GM12878 (cell line): ENCODE measurements at regions of chr10 and their contacts with region 1.

Region 1: DNA sequence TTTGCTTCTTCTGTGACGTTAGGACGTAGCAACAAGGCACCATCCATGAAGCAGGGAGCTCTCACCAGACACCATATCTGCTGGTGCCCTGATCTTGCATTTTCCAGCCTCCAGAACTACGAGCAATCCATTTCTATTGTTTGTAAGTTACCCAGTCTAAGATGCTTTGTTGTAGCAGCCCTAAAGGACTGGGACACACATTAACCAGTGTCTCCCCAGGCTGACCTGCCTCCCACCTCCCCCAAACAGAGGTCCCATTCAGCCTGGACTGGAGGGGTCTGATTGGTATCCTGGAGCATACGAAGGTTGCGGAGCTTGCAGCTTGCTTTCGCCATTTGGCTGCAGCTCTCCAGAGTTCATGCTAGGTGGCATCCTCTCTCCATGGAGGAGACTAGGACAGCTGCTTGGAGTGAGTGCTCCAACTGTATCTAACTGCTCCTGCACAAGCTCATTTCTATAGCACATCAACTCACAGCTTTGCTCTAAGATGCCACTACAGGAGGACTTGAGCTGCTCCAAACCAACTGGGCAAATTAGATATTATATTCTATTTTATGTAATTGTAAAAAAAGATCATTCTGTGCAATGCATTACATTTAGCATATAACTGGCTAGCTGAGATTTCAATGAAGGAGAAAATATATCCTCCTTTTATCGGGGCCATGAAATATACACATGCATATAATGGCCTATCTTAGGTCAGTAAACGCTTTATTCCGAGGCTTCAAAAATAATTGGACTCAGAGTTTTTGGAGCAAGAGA is 8.0 kb upstream of the GRK5 start:
- DNase-seq: no peak
- ATAC-seq: peak; percentile 93
- H3K4me3 ChIP-seq: no peak overlapping the region
- H3K27ac ChIP-seq: no peak overlapping the region
- H3K4me1 ChIP-seq: no peaks in the 10 kb centered on the region
- H3K27me3 ChIP-seq: no peaks in the 10 kb centered on the region
- CTCF ChIP-seq: peak; percentile 72 to 88 (median 80)
- EP300 ChIP-seq: no peak
- POLR2A ChIP-seq: no peak
- RAD21 ChIP-seq: peak; percentile 84

Region 2: DNA sequence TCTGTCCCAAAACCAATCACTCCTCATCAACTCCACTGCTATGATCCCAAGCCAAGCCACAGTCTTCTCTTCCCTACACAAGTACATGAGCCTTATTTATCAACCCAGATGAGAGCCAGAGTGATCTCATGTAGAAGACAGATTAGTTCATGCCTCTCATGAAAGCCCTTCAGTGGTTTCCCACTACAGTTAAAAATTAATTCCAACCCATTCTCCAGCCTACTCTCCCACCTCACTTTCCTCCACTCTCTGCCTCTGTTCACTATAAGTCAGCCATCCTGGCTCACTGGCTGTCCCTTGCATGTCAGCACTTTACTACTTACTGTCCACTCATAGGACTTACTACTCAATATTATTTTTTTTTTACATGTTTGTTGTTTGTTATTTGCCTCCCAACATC is 511.9 kb before region 1 on chr10:
- CTCF ChIA-PET with region 1: no interaction called
- POLR2A ChIA-PET with region 1: no interaction called
- RAD21 ChIA-PET with region 1: no interaction called
- SMC1A ChIA-PET with region 1: no interaction called
- in situ Hi-C with region 1: no loop called
- intact Hi-C with region 1: no loop called
- DNase-seq: no peak
- ATAC-seq: no peak
- H3K4me3 ChIP-seq: no peak overlapping the region
- H3K27ac ChIP-seq: no peak overlapping the region
- H3K4me1 ChIP-seq: no peaks in the 10 kb centered on the region
- H3K27me3 ChIP-seq: no peaks in the 10 kb centered on the region
- CTCF ChIP-seq: no peak
- EP300 ChIP-seq: no peak
- POLR2A ChIP-seq: no peak
- RAD21 ChIP-seq: no peak

Region 3: GRCh38 chr10:118781541-118781940 is 417.9 kb before region 1 on chr10:
- CTCF ChIA-PET with region 1: no interaction called
- POLR2A ChIA-PET with region 1: no interaction called
- RAD21 ChIA-PET with region 1: no interaction called
- SMC1A ChIA-PET with region 1: no interaction called
- in situ Hi-C with region 1: no loop called
- intact Hi-C with region 1: no loop called
- DNase-seq: no peak
- ATAC-seq: no peak
- H3K4me3 ChIP-seq: no peak overlapping the region
- H3K27ac ChIP-seq: no peak overlapping the region
- H3K4me1 ChIP-seq: no peaks in the 10 kb centered on the region
- H3K27me3 ChIP-seq: no peaks in the 10 kb centered on the region
- CTCF ChIP-seq: no peak
- EP300 ChIP-seq: no peak
- POLR2A ChIP-seq: no peak
- RAD21 ChIP-seq: no peak

Region 4: GRCh38 chr10:118970770-118971169 is 228.6 kb before region 1 on chr10:
- CTCF ChIA-PET with region 1: interaction called, 24 read pairs
- POLR2A ChIA-PET with region 1: no interaction called
- RAD21 ChIA-PET with region 1: interaction called, 8 read pairs
- SMC1A ChIA-PET with region 1: interaction called, 15 read pairs
- in situ Hi-C with region 1: no loop called
- intact Hi-C with region 1: no loop called
- DNase-seq: no peak
- ATAC-seq: no peak
- H3K4me3 ChIP-seq: no peak overlapping the region
- H3K27ac ChIP-seq: no peak overlapping the region
- H3K4me1 ChIP-seq: no peaks in the 10 kb centered on the region
- H3K27me3 ChIP-seq: peaks cover 0 to 5% of the 10 kb centered on the region in 2 experiments; a peak in 1 of 4 replicates
- CTCF ChIP-seq: no peak
- EP300 ChIP-seq: no peak
- POLR2A ChIP-seq: no peak
- RAD21 ChIP-seq: no peak

Region 5: GRCh38 chr10:119131512-119132240 is 67.7 kb before region 1 on chr10:
- CTCF ChIA-PET with region 1: interaction called, 6 read pairs
- POLR2A ChIA-PET with region 1: no interaction called
- RAD21 ChIA-PET with region 1: interaction called, 6 read pairs
- SMC1A ChIA-PET with region 1: interaction called, 10 read pairs
- in situ Hi-C with region 1: no loop called
- intact Hi-C with region 1: no loop called
- DNase-seq: peak; percentile 45
- ATAC-seq: peak; percentile 94
- H3K4me3 ChIP-seq: peak overlapping the region; percentile 24
- H3K27ac ChIP-seq: peak overlapping the region; percentile 76
- H3K4me1 ChIP-seq: peaks cover 14% of the 10 kb centered on the region
- H3K27me3 ChIP-seq: no peaks in the 10 kb centered on the region
- CTCF ChIP-seq: no peak
- EP300 ChIP-seq: no peak
- POLR2A ChIP-seq: peak; percentile 61
- RAD21 ChIP-seq: no peak

Region 6: GRCh38 chr10:119407254-119407777 is 207.9 kb after region 1 on chr10:
- CTCF ChIA-PET with region 1: interaction called, 10 read pairs
- POLR2A ChIA-PET with region 1: no interaction called
- RAD21 ChIA-PET with region 1: interaction called, 3 read pairs
- SMC1A ChIA-PET with region 1: interaction called, 4 read pairs
- in situ Hi-C with region 1: no loop called
- intact Hi-C with region 1: no loop called
- DNase-seq: peak; percentile 12
- ATAC-seq: peak; percentile 71
- H3K4me3 ChIP-seq: no peak overlapping the region
- H3K27ac ChIP-seq: no peak overlapping the region
- H3K4me1 ChIP-seq: peaks cover 7% of the 10 kb centered on the region; the same call in 1 of the 2 replicates
- H3K27me3 ChIP-seq: no peaks in the 10 kb centered on the region
- CTCF ChIP-seq: no peak
- EP300 ChIP-seq: no peak
- POLR2A ChIP-seq: no peak
- RAD21 ChIP-seq: no peak

Region 7: GRCh38 chr10:119445311-119445934 is 246.0 kb after region 1 on chr10:
- CTCF ChIA-PET with region 1: interaction called, 89 read pairs
- POLR2A ChIA-PET with region 1: interaction called, 3 read pairs
- RAD21 ChIA-PET with region 1: interaction called, 42 read pairs
- SMC1A ChIA-PET with region 1: interaction called, 27 read pairs
- in situ Hi-C with region 1: no loop called
- intact Hi-C with region 1: loop called (anchors 1 kb)
- DNase-seq: no peak
- ATAC-seq: peak; percentile 89
- H3K4me3 ChIP-seq: no peak overlapping the region
- H3K27ac ChIP-seq: no peak overlapping the region
- H3K4me1 ChIP-seq: peaks cover 14% of the 10 kb centered on the region
- H3K27me3 ChIP-seq: no peaks in the 10 kb centered on the region
- CTCF ChIP-seq: peak; percentile 86 to 92 (median 89)
- EP300 ChIP-seq: no peak
- POLR2A ChIP-seq: no peak
- RAD21 ChIP-seq: peak; percentile 78

Region 8: DNA sequence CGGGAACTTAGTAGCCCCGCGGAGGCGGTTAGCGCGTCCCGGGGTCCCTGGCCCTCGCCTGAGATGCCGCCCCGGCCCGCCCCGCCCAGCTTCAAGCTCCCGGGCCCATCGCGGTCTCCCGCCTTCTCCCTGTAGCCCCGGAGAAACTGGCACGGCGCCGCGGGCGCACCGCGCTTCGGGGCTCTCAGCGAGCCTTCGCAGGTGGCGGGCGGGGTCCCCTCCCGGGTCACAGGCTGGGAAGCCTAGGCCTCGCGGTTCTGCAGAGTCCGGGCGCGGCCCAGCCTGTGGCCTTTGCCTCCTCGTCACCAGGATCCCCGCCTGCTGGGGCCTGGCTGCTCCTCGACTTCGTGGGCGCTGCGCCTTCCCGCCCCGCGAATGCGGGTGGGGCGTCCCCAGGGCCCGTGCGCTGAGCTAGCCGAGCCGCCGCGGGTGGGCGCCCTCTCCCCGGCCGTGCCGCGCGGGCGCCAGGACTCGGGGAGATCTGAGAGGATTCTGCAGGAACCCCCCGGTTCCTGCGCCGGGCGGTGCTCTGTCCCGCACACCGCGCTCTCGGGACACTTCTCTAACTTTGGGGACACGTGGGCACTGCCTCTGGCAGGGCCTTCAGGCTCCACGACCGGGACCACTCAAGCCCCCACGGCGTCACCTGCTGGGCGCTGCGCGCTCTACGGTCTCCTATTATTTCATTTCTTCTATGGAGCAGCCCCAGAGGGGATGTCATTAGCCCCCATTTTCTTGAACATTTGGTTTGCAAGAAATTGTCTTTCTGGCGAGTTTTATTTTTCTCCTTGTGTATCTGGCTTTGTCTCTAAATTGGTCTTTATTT is 343.8 kb after region 1 on chr10:
- CTCF ChIA-PET with region 1: interaction called, 19 read pairs
- POLR2A ChIA-PET with region 1: interaction called, 5 read pairs
- RAD21 ChIA-PET with region 1: interaction called, 10 read pairs
- SMC1A ChIA-PET with region 1: interaction called, 4 read pairs
- in situ Hi-C with region 1: no loop called
- intact Hi-C with region 1: no loop called
- DNase-seq: no peak
- ATAC-seq: peak; percentile 49
- H3K4me3 ChIP-seq: peak overlapping the region; percentile 84
- H3K27ac ChIP-seq: peak overlapping the region; percentile 59
- H3K4me1 ChIP-seq: peaks cover 18% of the 10 kb centered on the region
- H3K27me3 ChIP-seq: no peaks in the 10 kb centered on the region
- CTCF ChIP-seq: peak; percentile 48 to 70 (median 66)
- EP300 ChIP-seq: no peak
- POLR2A ChIP-seq: no peak
- RAD21 ChIP-seq: peak; percentile 50